GM18951 (cell line): ENCODE measurements at regions of chrX and their contacts with region 1.

Region 1: DNA sequence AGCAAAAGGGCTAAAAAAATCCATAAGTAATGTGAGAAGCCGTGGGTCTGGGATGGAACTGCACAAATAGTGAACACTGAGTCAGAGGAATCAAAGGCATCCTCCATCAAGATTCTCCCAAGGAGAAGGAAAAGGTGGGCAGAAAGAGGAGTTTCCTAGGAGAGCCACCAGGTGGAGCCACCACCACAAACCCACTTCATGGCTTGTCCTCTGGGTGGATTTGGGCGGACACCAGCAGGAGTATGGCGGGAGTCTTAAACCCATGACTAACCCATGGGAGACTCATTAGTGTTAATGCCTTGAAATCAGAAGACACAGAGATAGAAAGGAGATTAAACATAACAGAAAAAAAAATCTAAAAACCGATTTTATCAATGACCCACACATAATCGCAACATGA is 147.7 kb downstream of the SH3KBP1 start:
- POLR2A ChIP-seq: no peak

Region 2: DNA sequence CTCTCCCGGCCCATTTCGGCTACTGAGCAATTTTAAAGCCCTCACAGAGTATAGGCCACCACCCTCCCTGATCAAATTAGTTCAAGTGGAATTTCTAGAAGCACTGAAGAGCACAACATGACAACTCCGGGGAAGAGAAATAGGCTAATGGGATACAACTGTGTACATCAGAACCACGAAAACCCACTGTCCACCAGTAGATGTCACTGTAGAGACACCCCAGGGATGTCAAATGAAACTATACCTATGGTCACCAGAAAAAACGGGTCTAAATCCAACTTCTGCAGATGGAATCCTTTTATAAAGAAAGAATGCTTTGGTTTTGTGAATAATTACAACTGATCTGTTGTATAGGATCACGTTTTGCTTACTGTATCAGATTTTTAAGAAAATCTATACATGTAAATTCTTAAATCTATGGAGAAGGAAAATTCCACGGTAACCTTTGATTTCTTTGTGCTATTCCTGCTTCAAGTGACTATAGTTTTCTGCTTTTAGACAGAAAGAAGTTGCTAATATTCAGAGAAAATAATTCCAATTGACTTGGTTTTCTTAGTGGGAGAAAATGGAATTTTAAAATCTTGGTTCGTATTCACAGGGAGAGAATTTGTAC is 194.9 kb before region 1 on chrX:
- in situ Hi-C with region 1: no loop called
- POLR2A ChIP-seq: no peak

Region 3: GRCh38 chrX:19852014-19853005 is 112.6 kb after region 1 on chrX:
- in situ Hi-C with region 1: no loop called
- POLR2A ChIP-seq: no peak

Region 4: DNA sequence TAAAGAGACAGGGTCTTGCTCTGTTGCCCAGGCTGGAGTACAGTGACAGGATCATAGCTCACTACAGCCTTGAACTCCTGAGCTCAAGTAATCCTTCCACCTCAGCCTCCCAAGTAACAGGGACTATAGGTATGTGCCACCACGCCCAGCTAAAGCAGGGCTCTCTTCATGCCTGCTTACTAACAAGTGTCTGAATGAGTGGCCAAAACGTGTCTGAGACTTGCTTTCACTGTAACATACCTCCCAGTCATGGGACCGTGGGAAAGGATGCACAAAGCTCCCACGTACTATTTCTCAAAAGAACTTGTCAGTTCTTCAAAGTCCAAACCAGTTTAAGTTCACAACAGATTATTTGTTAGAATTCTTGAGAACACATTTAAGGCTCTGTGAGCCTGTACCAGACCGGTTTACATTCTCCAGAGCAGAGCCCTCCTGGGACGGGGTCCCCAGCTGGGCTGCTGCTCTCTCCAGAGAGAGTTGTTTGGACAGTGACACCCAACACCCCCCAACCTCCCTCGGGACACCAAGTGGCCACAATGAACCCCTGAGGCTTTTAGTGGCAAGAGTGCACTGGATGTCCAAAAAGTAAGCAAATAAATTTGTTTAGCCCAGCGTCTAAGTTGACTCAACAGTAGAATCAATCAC is 123.7 kb after region 1 on chrX:
- in situ Hi-C with region 1: loop called (anchors 10 kb)
- POLR2A ChIP-seq: peak; percentile 35

Region 5: GRCh38 chrX:19887911-19888879 is 148.5 kb after region 1 on chrX:
- in situ Hi-C with region 1: loop called (anchors 10 kb)
- POLR2A ChIP-seq: no peak